ENCODE measurements at regions of chr10 and their contacts with region 1.

Region 1: DNA sequence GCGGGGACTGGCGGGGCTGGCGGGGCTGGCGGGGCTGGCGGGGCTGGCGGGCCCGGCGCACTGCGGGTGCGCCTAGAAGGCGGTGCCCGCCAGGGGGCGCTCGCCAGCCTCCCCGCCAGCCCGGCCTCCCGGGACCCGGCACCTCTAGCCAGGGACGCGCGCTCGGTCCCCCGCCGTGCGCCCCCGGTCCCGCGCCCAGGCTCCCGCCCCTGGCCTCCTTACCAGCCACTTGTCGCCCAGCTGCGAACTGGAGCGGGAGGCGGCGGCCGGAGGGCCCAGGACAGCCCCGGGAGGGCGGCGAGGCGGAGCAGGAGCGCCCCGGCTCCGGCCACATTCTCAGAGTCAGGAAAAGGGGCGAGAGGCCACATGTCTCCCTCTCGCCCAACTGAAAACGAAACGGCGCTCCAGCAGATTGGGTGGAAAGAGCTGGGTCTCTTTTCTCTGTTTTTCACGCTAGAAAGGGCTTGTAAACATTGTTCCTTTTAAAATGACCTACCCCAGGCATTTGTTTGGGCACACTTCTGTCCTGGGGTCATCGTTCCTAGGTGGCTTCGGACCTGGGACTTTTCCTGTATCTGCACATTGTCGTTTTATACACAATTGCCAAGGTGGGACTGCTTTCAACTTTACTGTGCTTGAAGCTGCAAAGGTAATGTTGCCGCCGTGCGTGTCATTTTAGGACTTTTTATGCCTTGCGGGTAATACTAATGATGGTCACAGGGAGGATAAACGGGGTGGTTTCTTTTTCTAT is 378 bp upstream of the PRKCQ start:
- DNase-seq: peak; percentile 89
- ATAC-seq: peak; percentile 74
- H3K4me3 Mint-ChIP-seq: peak overlapping the region; percentile 97
- H3K27ac Mint-ChIP-seq: peak overlapping the region; percentile 93
- H3K4me1 Mint-ChIP-seq: peaks cover 59% of the 10 kb centered on the region
- H3K27me3 Mint-ChIP-seq: no peaks in the 10 kb centered on the region

Region 2: GRCh38 chr10:6473901-6474370 is 106.5 kb before region 1 on chr10:
- CTCF ChIA-PET with region 1: interaction called, 21 read pairs
- DNase-seq: peak; percentile 69
- ATAC-seq: peak; percentile 81
- H3K4me3 Mint-ChIP-seq: peak overlapping the region; percentile 87
- H3K27ac Mint-ChIP-seq: peak overlapping the region; percentile 100
- H3K4me1 Mint-ChIP-seq: peaks cover 61% of the 10 kb centered on the region
- H3K27me3 Mint-ChIP-seq: no peaks in the 10 kb centered on the region

Region 3: DNA sequence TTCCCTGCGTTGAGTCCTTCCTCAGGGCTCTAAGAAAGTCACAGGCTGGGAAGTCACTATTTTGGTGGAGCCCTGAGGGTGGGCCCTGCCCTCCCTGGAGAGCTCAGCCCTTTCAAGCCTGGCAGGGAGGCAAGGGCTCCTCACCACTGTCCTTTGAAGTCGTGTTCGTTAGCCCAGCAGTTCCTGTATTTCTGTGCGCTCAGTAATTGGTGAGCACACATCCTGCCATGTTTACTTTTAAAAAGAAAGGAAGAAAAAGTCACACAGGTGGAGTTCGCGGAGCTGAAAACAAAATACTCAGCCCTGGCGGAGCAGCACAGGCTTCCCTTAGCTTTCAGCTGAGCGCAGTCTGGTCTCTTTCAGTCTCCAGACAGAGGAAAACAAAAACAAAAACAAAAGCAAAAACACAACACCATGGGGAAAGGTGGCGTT is 37.4 kb before region 1 on chr10:
- CTCF ChIA-PET with region 1: interaction called, 14 read pairs
- DNase-seq: peak; percentile 71
- ATAC-seq: peak; percentile 69
- H3K4me3 Mint-ChIP-seq: peak overlapping the region; percentile 79
- H3K27ac Mint-ChIP-seq: peak overlapping the region; percentile 99
- H3K4me1 Mint-ChIP-seq: peaks cover 68% of the 10 kb centered on the region
- H3K27me3 Mint-ChIP-seq: no peaks in the 10 kb centered on the region

Region 4: GRCh38 chr10:6603142-6604125 is 23.0 kb after region 1 on chr10:
- CTCF ChIA-PET with region 1: interaction called, 11 read pairs
- DNase-seq: no peak
- ATAC-seq: no peak
- H3K4me3 Mint-ChIP-seq: no peak overlapping the region
- H3K27ac Mint-ChIP-seq: no peak overlapping the region
- H3K4me1 Mint-ChIP-seq: peaks cover 60% of the 10 kb centered on the region
- H3K27me3 Mint-ChIP-seq: no peaks in the 10 kb centered on the region

Region 5: GRCh38 chr10:6647811-6648526 is 67.5 kb after region 1 on chr10:
- CTCF ChIA-PET with region 1: interaction called, 56 read pairs
- DNase-seq: peak; percentile 85
- ATAC-seq: peak; percentile 87
- H3K4me3 Mint-ChIP-seq: no peak overlapping the region
- H3K27ac Mint-ChIP-seq: no peak overlapping the region
- H3K4me1 Mint-ChIP-seq: peaks cover 43% of the 10 kb centered on the region
- H3K27me3 Mint-ChIP-seq: no peaks in the 10 kb centered on the region

Region 6: GRCh38 chr10:7045891-7046599 is 465.6 kb after region 1 on chr10:
- CTCF ChIA-PET with region 1: no interaction called
- DNase-seq: peak; percentile 77
- ATAC-seq: peak; percentile 77
- H3K4me3 Mint-ChIP-seq: no peak overlapping the region
- H3K27ac Mint-ChIP-seq: peak overlapping the region; percentile 89
- H3K4me1 Mint-ChIP-seq: peaks cover 55% of the 10 kb centered on the region
- H3K27me3 Mint-ChIP-seq: no peaks in the 10 kb centered on the region